Right ventricle myocardium inferior (tissue), 1 donor: ENCODE measurements at regions of chr7 and their contacts with region 1.

Region 1: GRCh38 chr7:99408379-99409191 is at the starts of genes BUD31 and PDAP1:
- DNase-seq: peak; percentile 97
- ATAC-seq: peak; percentile 95
- total RNA-seq, gene BUD31: 38.1 TPM
- total RNA-seq, gene PDAP1: 107 TPM

Region 2: DNA sequence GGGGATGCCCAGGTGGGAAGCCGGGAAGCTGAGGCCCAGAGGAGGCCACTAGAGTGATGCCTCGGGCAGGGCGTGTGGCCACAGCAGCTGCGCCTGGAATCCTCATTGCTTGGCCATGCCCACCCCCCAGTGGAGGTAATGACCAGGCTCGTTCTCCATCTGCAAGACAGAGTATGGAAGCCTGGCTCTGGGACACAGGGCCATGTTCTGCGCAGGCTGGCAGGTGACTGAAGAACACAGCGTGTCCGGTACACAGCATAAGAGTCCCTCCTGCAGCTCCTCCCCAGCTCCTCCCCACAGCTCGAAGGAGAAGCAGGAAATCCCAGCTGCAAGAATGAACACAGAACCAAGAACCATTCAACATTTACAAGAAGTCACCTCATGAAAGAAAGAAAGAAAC is 329.5 kb before region 1 on chr7:
- intact Hi-C with region 1: no loop called
- DNase-seq: no peak
- ATAC-seq: no peak

Region 3: GRCh38 chr7:99325545-99326407 is 82.8 kb before region 1 on chr7 and contains the start of gene ARPC1A:
- intact Hi-C with region 1: loop called (anchors 5 kb)
- DNase-seq: peak; percentile 94
- ATAC-seq: peak; percentile 98
- total RNA-seq, gene ARPC1A: 139 TPM